Panc1 (cell line): ENCODE measurements at regions of chr15 and their contacts with region 1.

Region 1: GRCh38 chr15:52139599-52140491 is 27.3 kb upstream of the BCL2L10 start:
- DNase-seq: peak; percentile 51
- ATAC-seq: peak; percentile 85
- H3K4me3 ChIP-seq: no peak overlapping the region
- H3K27ac ChIP-seq: no peak overlapping the region
- H3K4me1 ChIP-seq: no peaks in the 10 kb centered on the region
- H3K27me3 ChIP-seq: no peaks in the 10 kb centered on the region
- CTCF ChIP-seq: peak; percentile 93

Region 2: DNA sequence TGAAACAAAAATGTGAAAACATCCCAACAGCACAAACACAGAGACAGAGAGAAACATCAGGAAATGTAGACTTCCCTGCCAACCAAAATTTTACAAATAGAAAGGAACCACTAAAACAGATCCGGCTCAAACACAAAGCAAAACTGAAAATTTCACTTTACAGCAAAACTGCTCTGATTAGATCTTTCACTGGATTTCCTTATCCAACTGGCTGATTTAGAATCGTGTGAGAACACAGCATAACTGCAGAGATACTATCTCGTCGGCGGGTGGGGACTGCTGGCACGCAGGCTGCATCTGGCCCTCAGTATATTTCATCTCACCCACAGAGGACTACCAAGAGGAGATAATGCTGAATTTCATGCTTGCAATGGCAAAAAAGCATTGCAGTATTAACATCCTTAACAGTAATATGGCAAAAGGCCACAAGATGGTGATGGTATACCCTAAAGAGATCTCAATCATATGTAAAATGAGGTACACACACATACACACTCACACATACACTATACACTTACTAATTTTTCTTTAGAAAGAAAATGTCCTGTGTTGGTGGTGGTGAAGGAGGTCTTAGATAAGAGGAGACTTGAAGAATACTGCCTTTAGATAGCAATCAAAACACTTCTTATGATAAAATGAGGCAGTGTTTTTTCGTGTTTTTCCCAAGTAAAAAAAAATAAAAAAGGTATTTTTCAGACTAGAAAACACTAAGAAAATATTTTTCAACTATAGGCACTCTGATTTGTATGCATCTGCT is 157.7 kb before region 1 on chr15:
- CTCF ChIA-PET with region 1: no interaction called
- POLR2A ChIA-PET with region 1: no interaction called
- in situ Hi-C with region 1: no loop called
- intact Hi-C with region 1: loop called (anchors 2 kb)
- DNase-seq: peak; percentile 85
- ATAC-seq: peak; percentile 95
- H3K4me3 ChIP-seq: peak overlapping the region; percentile 6 to 43; a peak in 3 of 4 replicates
- H3K27ac ChIP-seq: peak overlapping the region; percentile 75
- H3K4me1 ChIP-seq: peaks cover 7% of the 10 kb centered on the region
- H3K27me3 ChIP-seq: no peaks in the 10 kb centered on the region
- CTCF ChIP-seq: no peak

Region 3: GRCh38 chr15:52649686-52650085 is 509.8 kb after region 1 on chr15:
- CTCF ChIA-PET with region 1: interaction called, 12 read pairs
- POLR2A ChIA-PET with region 1: no interaction called
- in situ Hi-C with region 1: no loop called
- intact Hi-C with region 1: no loop called
- DNase-seq: no peak
- ATAC-seq: no peak
- H3K4me3 ChIP-seq: no peak overlapping the region
- H3K27ac ChIP-seq: peak overlapping the region; percentile 93; the same call in 1 of the 2 replicates
- H3K4me1 ChIP-seq: peaks cover 40% of the 10 kb centered on the region
- H3K27me3 ChIP-seq: no peaks in the 10 kb centered on the region
- CTCF ChIP-seq: no peak